Ascending aorta (tissue), 2 donors: ENCODE measurements at regions of chr9 and their contacts with region 1.

Region 1: DNA sequence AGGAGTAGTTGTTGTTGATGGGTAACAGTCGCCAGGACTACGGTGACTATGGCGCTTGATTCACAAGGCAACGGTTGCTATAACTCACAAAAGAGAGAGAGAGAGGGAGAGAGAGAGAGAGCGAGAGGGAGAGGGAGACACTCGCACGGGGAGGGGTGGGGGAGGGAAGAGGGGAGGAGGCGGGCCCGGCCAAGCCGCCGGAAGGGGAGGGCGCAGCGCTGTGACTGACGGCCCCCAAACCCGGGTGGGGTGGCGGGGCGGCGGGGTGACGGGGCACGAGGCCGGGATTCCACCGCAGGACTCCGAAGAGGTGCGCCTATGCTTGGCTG is at the start of gene RFX3:
- DNase-seq: peak; percentile 70 to 94
- H3K4me3 ChIP-seq: peak within 1 kb of the TSS; percentile 92 to 93
- H3K27ac ChIP-seq: peak within 1 kb of the TSS; percentile 99 to 100
- H3K4me1 ChIP-seq: peaks cover 0 to 17% of the 10 kb centered on the region in 2 donors
- H3K27me3 ChIP-seq: no peaks in the 10 kb centered on the region
- CTCF ChIP-seq: no peak
- total RNA-seq, gene RFX3: 4.0 TPM

Region 2: DNA sequence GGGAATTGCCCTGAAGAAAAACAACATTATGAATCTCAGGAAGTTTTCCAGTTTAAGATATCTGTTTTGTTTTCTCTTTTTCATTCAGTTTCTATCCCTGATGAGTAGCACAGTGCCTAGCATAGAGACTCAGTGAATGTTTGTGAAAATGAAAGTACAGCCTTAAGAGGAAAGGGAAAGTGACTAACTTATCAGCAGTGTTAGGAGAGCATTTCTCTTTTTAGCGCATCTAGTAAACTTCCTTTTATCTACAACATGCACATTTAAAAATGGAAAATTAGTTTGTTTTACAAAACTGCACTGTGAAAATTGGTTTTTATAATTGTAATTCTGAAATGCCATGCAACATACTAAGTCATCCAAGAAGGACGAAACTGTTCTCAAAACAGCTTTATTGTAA is 1399.9 kb before region 1 on chr9:
- intact Hi-C with region 1: loop called (anchors 10 kb)
- DNase-seq: no peak
- H3K4me3 ChIP-seq: peak overlapping the region; percentile 36 to 37
- H3K27ac ChIP-seq: peak overlapping the region; percentile 85 to 89
- H3K4me1 ChIP-seq: peaks cover 7 to 73% of the 10 kb centered on the region in 2 donors
- H3K27me3 ChIP-seq: no peaks in the 10 kb centered on the region
- CTCF ChIP-seq: no peak

Region 3: DNA sequence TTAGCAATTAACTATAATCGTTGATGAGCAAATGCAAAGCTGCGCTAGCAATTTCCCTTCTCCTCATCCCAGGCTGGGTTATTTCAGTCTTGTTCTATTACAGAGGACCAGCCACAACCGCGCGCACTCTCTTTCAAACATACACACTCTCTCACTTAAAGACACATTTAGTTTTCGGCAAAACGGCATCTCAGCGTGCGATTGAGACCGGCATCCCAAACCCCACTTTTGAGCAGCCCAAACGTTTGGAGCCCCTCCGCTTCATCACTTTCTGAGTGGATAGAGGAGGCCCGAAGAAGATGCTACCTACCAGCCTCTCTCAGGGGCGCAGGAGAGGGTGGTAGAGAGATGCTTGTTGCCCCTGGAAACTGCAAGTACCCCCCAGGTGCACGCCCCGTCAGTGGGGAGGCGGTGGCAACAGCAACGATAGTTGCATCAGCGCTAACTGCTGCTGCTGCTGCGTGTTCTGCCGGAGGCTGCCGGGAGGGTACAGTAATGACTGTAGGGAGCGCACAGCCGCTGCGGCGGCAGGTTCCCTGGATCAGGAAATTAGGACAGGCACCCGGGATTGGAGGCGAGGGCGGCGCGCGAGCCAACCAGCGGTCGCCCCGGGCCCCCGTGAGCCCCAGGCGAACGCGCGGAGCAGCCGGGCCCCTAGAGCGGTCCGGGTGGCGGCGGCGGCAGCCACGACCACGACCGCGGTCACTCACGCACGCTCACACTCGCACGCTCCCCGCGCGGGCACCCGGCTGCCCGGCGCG is 904.7 kb before region 1 on chr9:
- intact Hi-C with region 1: loop called (anchors 10 kb)
- DNase-seq: peak in 1 of 2 donors; percentile 90
- H3K4me3 ChIP-seq: peak overlapping the region; percentile 84 to 86
- H3K27ac ChIP-seq: peak overlapping the region in 1 of 2 donors; percentile 81
- H3K4me1 ChIP-seq: no peaks in the 10 kb centered on the region
- H3K27me3 ChIP-seq: no peaks in the 10 kb centered on the region
- CTCF ChIP-seq: peak in 1 of 3 experiments; percentile 40

Region 4: GRCh38 chr9:3436629-3437420 is 89.0 kb before region 1 on chr9:
- intact Hi-C with region 1: no loop called
- DNase-seq: no peak
- H3K4me3 ChIP-seq: no peak overlapping the region
- H3K27ac ChIP-seq: no peak overlapping the region
- H3K4me1 ChIP-seq: no peaks in the 10 kb centered on the region
- H3K27me3 ChIP-seq: no peaks in the 10 kb centered on the region
- CTCF ChIP-seq: no peak

Region 5: GRCh38 chr9:4117835-4118610 is 592.2 kb after region 1 on chr9:
- intact Hi-C with region 1: loop called (anchors 10 kb)
- DNase-seq: no peak
- H3K4me3 ChIP-seq: no peak overlapping the region
- H3K27ac ChIP-seq: peak overlapping the region; percentile 16 to 62
- H3K4me1 ChIP-seq: peaks cover 0 to 35% of the 10 kb centered on the region in 2 donors
- H3K27me3 ChIP-seq: no peaks in the 10 kb centered on the region
- CTCF ChIP-seq: peak in 2 of 3 experiments; percentile 15 to 25

Region 6: DNA sequence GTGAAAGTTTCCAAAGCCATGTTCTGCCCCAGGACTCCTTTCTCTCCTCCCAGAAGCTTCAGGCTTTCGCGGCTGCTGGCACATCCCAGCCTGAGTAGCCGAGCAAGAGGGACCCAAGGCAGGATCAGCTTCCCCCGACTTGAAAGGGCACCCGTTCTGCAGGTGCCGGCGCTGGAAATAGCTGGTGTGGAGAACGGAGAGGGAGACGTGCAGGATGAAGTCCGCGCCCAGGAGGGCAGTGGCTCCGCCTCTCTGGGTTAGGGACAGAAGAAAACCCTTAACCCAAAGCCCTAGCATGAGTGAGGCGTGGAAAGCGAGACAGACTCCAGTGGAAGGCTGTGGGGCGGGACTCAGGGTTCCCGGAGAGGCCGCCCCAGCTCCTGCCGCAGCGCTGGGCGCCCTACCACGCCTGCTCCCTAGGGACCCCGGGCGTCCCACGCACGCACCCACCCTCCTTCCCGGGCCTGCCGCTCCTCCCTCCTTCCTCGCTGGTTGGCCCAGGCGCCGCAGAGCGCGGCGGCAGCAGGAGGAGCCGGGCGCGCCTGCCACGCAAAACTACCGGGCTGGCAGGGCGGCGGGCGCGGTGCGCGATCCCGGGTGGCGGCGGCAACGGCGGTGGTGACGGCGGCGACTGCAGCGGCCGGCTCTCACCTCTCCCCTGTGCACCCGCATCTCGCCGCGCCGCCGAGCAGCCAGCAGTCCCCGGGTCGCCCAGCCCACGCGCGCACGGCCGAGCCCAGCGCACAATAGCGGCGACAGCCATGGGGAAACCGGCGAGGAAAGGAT is 964.3 kb after region 1 on chr9 and contains the start of gene SLC1A1:
- intact Hi-C with region 1: loop called (anchors 5 kb)
- DNase-seq: peak; percentile 15 to 85
- H3K4me3 ChIP-seq: peak within 1 kb of the TSS; percentile 67 to 87
- H3K27ac ChIP-seq: peak within 1 kb of the TSS; percentile 81 to 84
- H3K4me1 ChIP-seq: peaks cover 0 to 6% of the 10 kb centered on the region in 2 donors
- H3K27me3 ChIP-seq: no peaks in the 10 kb centered on the region
- CTCF ChIP-seq: no peak
- total RNA-seq, gene SLC1A1: 6.5 TPM

Region 7: GRCh38 chr9:4740638-4741364 is 1215.0 kb after region 1 on chr9 and contains the start of gene AK3:
- intact Hi-C with region 1: loop called (anchors 2 kb)
- DNase-seq: peak; percentile 29 to 92
- H3K4me3 ChIP-seq: peak within 1 kb of the TSS; percentile 76 to 88
- H3K27ac ChIP-seq: peak within 1 kb of the TSS; percentile 86 to 87
- H3K4me1 ChIP-seq: peaks cover 3 to 17% of the 10 kb centered on the region in 2 donors
- H3K27me3 ChIP-seq: no peaks in the 10 kb centered on the region
- CTCF ChIP-seq: peak in 2 of 3 experiments; percentile 18 to 41
- total RNA-seq, gene AK3: 37.1 TPM

Region 8: GRCh38 chr9:5450359-5451091 is 1924.7 kb after region 1 on chr9 and contains the start of gene CD274:
- intact Hi-C with region 1: loop called (anchors 5 kb)
- DNase-seq: peak; percentile 56 to 94
- H3K4me3 ChIP-seq: peak within 1 kb of the TSS; percentile 60 to 72
- H3K27ac ChIP-seq: peak within 1 kb of the TSS; percentile 79 to 80
- H3K4me1 ChIP-seq: peaks cover 3 to 30% of the 10 kb centered on the region in 2 donors
- H3K27me3 ChIP-seq: no peaks in the 10 kb centered on the region
- CTCF ChIP-seq: peak; percentile 67 to 85 (median 80)
- total RNA-seq, gene CD274: 23.8 TPM